ENCODE measurements at regions of chr21 and their contacts with region 1.

Region 1: GRCh38 chr21:14523234-14523633 is 22.9 kb downstream of the SAMSN1 start:
- DNase-seq: peak; percentile 35
- H3K4me3 Mint-ChIP-seq: peak overlapping the region; percentile 68
- H3K27ac Mint-ChIP-seq: peak overlapping the region; percentile 91
- H3K4me1 Mint-ChIP-seq: peaks cover 72% of the 10 kb centered on the region
- H3K27me3 Mint-ChIP-seq: no peaks in the 10 kb centered on the region

Region 2: DNA sequence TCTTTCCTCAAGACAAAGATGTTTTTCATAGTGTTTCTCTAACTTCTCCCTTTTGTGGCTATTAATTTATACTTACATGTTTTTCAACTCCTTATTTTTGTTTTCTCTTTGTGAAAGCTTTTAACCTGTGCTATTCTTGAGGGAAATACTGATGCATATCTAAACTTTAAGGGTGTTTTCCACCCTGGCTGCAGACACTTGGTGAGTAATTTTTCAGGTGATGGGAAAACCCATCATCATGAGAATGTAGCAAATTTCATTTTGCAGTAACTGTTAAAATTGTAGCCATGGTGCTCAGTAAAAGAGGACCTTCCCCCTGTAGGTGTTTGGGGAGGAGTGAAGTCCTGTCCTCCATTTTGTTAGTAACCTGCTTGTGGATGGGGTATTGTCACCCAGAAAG is 436.7 kb before region 1 on chr21:
- intact Hi-C with region 1: loop called (anchors 5 kb)
- DNase-seq: no peak
- H3K4me3 Mint-ChIP-seq: no peak overlapping the region
- H3K27ac Mint-ChIP-seq: peak overlapping the region; percentile 90
- H3K4me1 Mint-ChIP-seq: peaks cover 33% of the 10 kb centered on the region
- H3K27me3 Mint-ChIP-seq: no peaks in the 10 kb centered on the region

Region 3: GRCh38 chr21:14487490-14488432 is 35.5 kb before region 1 on chr21:
- intact Hi-C with region 1: loop called (anchors 1 kb)
- DNase-seq: no peak
- H3K4me3 Mint-ChIP-seq: peak overlapping the region; percentile 31
- H3K27ac Mint-ChIP-seq: peak overlapping the region; percentile 90
- H3K4me1 Mint-ChIP-seq: peaks cover 74% of the 10 kb centered on the region
- H3K27me3 Mint-ChIP-seq: no peaks in the 10 kb centered on the region

Region 4: GRCh38 chr21:14554948-14555347 is 31.7 kb after region 1 on chr21:
- intact Hi-C with region 1: no loop called
- DNase-seq: peak; percentile 21
- H3K4me3 Mint-ChIP-seq: peak overlapping the region; percentile 12
- H3K27ac Mint-ChIP-seq: peak overlapping the region; percentile 30
- H3K4me1 Mint-ChIP-seq: peaks cover 75% of the 10 kb centered on the region
- H3K27me3 Mint-ChIP-seq: no peaks in the 10 kb centered on the region

Region 5: GRCh38 chr21:14572204-14572780 is 49.1 kb after region 1 on chr21:
- intact Hi-C with region 1: loop called (anchors 1 kb)
- DNase-seq: no peak
- H3K4me3 Mint-ChIP-seq: peak overlapping the region; percentile 67
- H3K27ac Mint-ChIP-seq: peak overlapping the region; percentile 89
- H3K4me1 Mint-ChIP-seq: peaks cover 60% of the 10 kb centered on the region
- H3K27me3 Mint-ChIP-seq: no peaks in the 10 kb centered on the region

Region 6: GRCh38 chr21:14630556-14631069 is 107.4 kb after region 1 on chr21:
- intact Hi-C with region 1: loop called (anchors 1 kb)
- DNase-seq: no peak
- H3K4me3 Mint-ChIP-seq: no peak overlapping the region
- H3K27ac Mint-ChIP-seq: peak overlapping the region; percentile 72
- H3K4me1 Mint-ChIP-seq: peaks cover 14% of the 10 kb centered on the region
- H3K27me3 Mint-ChIP-seq: peaks cover 2% of the 10 kb centered on the region

Region 7: DNA sequence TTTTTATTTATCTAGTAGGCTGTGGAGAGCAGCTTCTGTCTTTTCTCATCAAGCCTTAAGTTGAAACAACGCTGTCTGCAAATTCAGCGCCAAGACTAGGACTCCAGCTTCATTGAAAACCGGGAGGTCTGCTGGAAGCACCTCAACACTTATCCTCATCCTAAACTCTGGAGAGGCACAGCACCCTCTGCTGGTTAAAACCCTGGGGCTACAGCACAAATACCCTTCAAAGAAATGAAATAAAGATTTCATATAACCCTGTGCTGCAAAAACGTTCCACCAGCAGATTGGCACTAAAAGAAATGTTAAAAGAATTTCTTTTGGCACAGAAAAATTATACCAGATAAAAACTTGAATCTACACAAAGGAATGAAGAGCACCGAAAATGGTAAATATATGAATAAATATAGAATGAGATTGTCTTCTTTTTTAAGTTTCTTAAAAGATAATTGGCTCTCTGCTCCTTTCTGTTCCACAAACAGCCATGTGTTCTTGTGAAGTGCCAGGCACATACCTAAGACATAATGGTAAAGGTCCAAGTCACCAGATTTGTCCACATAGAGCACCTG is 250.6 kb after region 1 on chr21:
- intact Hi-C with region 1: loop called (anchors 5 kb)
- DNase-seq: peak; percentile 45
- H3K4me3 Mint-ChIP-seq: no peak overlapping the region
- H3K27ac Mint-ChIP-seq: no peak overlapping the region
- H3K4me1 Mint-ChIP-seq: no peaks in the 10 kb centered on the region
- H3K27me3 Mint-ChIP-seq: peaks cover 2% of the 10 kb centered on the region

Region 8: DNA sequence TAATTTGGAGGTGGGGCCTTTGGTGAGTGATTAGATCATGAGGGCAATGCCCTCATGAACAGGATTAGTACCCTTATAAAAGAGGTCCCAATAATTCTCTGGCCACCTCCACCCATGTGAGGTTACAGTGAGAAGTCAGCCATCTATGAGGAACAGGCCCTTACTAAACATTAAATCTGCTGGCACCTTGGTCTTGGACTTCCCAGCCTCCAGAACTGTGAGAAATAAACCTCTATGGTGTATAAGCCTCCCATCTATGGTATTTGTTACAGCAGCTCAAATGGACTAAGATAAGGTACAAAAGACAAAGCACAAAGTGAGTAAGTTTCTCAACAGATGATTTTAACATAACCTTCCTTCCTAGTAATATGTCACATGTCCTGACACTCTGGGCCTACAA is 519.3 kb after region 1 on chr21:
- intact Hi-C with region 1: no loop called
- DNase-seq: no peak
- H3K4me3 Mint-ChIP-seq: no peak overlapping the region
- H3K27ac Mint-ChIP-seq: no peak overlapping the region
- H3K4me1 Mint-ChIP-seq: no peaks in the 10 kb centered on the region
- H3K27me3 Mint-ChIP-seq: no peaks in the 10 kb centered on the region

Region 9: DNA sequence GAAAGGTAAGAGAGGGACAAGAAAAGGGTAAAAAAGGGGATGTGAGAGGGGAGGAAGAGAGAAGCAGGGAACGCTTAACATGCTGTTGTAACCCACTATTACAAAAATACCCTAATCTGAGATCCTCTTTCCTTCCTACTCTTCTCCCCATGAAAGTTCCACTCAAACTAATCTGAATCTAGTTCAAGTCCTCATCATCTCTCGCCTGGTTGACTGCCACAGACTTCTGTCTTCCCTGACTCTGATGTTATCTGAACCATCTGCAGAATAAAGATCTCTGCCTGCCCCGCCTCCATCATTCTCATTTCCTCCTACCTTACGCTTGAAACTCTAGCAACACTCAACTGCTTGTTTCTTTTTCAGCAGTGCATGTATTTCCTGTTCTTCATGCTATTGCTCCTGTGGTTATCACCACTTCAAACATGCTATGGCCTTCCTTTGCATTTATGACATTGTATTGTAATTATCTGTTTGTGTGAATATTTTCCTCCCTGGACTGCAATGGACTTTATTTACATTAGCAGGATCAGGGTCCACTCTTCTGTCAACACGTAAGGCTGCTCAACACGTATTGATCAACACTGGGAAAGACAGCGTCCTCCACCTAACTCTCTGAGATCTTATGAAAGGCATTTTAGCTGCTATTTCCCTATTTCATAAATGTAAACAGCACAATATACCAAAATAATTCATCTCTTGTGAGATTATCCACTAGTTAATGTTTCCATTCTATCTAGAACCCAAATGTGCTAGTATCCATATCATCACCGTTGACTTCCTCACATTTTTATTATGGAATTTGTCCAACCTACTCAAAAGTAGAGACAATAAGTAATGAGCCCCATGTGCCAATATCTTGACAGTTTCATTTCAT is 991.1 kb after region 1 on chr21:
- intact Hi-C with region 1: loop called (anchors 10 kb)
- DNase-seq: peak; percentile 57
- H3K4me3 Mint-ChIP-seq: peak overlapping the region; percentile 21
- H3K27ac Mint-ChIP-seq: peak overlapping the region; percentile 69
- H3K4me1 Mint-ChIP-seq: peaks cover 21% of the 10 kb centered on the region
- H3K27me3 Mint-ChIP-seq: no peaks in the 10 kb centered on the region

Measured in activated T-helper 1 cell treated with anti-CD3 and anti-CD28 coated beads, Interleukin-12 subunit alpha, Interleukin-12 subunit beta, Interleukin-2, Interleukin-4 antibody, amounts not matched to agents 30 ng/mL and 10 ng/mL and 1 ng/mL, durations not matched to agents 14 hours and 24 hours and 36 hours (primary cell).